ENCODE measurements at regions of chrX and their contacts with region 1.

Region 1: GRCh38 chrX:64205735-64206491 is 405 bp upstream of the AMER1 start:
- DNase-seq: peak; percentile 85 to 91 (median 87)
- H3K4me3 ChIP-seq: peak overlapping the region; percentile 42 to 83
- H3K4me3 Mint-ChIP-seq: peak overlapping the region; percentile 91 to 97 (median 93)
- H3K27ac ChIP-seq: peak overlapping the region; percentile 79
- H3K27ac Mint-ChIP-seq: peak overlapping the region; percentile 90 to 96 (median 93)
- H3K4me1 ChIP-seq: peaks cover 15% of the 10 kb centered on the region
- H3K4me1 Mint-ChIP-seq: peaks cover 6 to 25% (median 16%) of the 10 kb centered on the region in 4 donors
- H3K27me3 ChIP-seq: no peaks in the 10 kb centered on the region
- H3K27me3 Mint-ChIP-seq: no peaks in the 10 kb centered on the region

Region 2: DNA sequence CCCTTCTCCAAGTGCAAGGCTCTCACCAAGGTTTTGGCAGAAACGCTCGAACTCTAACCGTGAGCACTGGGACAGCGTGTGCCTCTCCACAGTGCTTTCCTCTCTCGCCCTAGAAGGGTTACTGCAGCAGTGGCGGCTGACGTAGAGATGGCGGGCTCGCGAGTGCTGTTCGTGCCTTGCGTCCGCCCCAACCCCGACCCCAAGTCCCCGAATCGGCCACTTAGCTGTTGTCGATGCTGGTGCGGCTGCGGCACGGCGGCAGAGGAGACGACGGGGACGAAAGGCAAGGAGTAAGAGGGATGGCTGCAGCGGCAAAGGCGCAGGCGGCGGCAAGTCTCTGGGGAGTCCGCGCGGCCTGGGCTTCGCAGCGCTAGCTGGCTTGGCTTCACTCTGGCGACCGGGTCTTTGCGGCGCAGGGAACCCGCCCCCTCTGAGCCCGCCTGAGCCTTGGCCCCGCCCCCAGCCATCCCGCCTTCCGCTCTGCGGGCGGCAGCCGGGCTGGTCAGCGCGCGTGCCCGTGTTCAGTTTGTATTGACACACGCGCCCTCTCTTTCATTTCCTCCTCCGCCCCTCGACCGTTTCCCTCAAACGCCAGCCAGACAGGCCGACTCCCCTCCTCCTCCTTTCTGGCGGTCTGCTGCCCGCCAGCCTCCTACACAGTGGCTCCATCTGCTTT is 854.8 kb before region 1 on chrX and contains the start of gene SPIN4:
- CTCF ChIA-PET with region 1: no interaction called
- POLR2A ChIA-PET with region 1: no interaction called
- intact Hi-C with region 1: loop called (anchors 2 kb)
- DNase-seq: peak; percentile 40 to 47 (median 43)
- H3K4me3 ChIP-seq: peak within 1 kb of the TSS; percentile 40 to 63
- H3K4me3 Mint-ChIP-seq: peak within 1 kb of the TSS; percentile 83 to 95 (median 92)
- H3K27ac ChIP-seq: peak within 1 kb of the TSS; percentile 37
- H3K27ac Mint-ChIP-seq: peak within 1 kb of the TSS; percentile 74 to 89 (median 86)
- H3K4me1 ChIP-seq: peaks cover 15% of the 10 kb centered on the region
- H3K4me1 Mint-ChIP-seq: peaks cover 8 to 29% (median 16%) of the 10 kb centered on the region in 4 donors
- H3K27me3 ChIP-seq: no peaks in the 10 kb centered on the region
- H3K27me3 Mint-ChIP-seq: no peaks in the 10 kb centered on the region
- total RNA-seq, gene SPIN4: 3.8 to 4.2 TPM

Region 3: GRCh38 chrX:64394874-64395567 is 189.1 kb after region 1 on chrX and contains the start of gene MTMR8:
- CTCF ChIA-PET with region 1: no interaction called
- POLR2A ChIA-PET with region 1: interaction called, 15 read pairs
- intact Hi-C with region 1: no loop called
- DNase-seq: peak; percentile 77 to 83 (median 80)
- H3K4me3 ChIP-seq: peak within 1 kb of the TSS; percentile 52 to 79
- H3K4me3 Mint-ChIP-seq: peak within 1 kb of the TSS; percentile 90 to 97 (median 94)
- H3K27ac ChIP-seq: peak within 1 kb of the TSS; percentile 54
- H3K27ac Mint-ChIP-seq: peak within 1 kb of the TSS; percentile 86 to 93 (median 91)
- H3K4me1 ChIP-seq: peaks cover 15% of the 10 kb centered on the region
- H3K4me1 Mint-ChIP-seq: peaks cover 12 to 56% (median 32%) of the 10 kb centered on the region in 4 donors
- H3K27me3 ChIP-seq: no peaks in the 10 kb centered on the region
- H3K27me3 Mint-ChIP-seq: no peaks in the 10 kb centered on the region
- total RNA-seq, gene MTMR8: 7.6 to 8.3 TPM

Region 4: GRCh38 chrX:64975989-64976672 is 770.2 kb after region 1 on chrX and contains the start of gene ZC4H2:
- CTCF ChIA-PET with region 1: no interaction called
- POLR2A ChIA-PET with region 1: interaction called, 5 read pairs
- intact Hi-C with region 1: loop called (anchors 10 kb)
- DNase-seq: peak; percentile 65 to 77 (median 68)
- H3K4me3 ChIP-seq: peak within 1 kb of the TSS; percentile 61 to 73
- H3K4me3 Mint-ChIP-seq: peak within 1 kb of the TSS; percentile 89 to 98 (median 96)
- H3K27ac ChIP-seq: peak within 1 kb of the TSS; percentile 24
- H3K27ac Mint-ChIP-seq: peak within 1 kb of the TSS; percentile 65 to 91 (median 87)
- H3K4me1 ChIP-seq: peaks cover 15% of the 10 kb centered on the region
- H3K4me1 Mint-ChIP-seq: peaks cover 4 to 33% (median 16%) of the 10 kb centered on the region in 4 donors
- H3K27me3 ChIP-seq: no peaks in the 10 kb centered on the region
- H3K27me3 Mint-ChIP-seq: no peaks in the 10 kb centered on the region
- total RNA-seq, gene ZC4H2: 8.2 to 11.8 TPM

Region 5: GRCh38 chrX:65034668-65035445 is 828.9 kb after region 1 on chrX:
- CTCF ChIA-PET with region 1: no interaction called
- POLR2A ChIA-PET with region 1: interaction called, 10 read pairs
- intact Hi-C with region 1: no loop called
- DNase-seq: peak; percentile 76 to 79 (median 79)
- H3K4me3 ChIP-seq: peak within 1 kb of the TSS; percentile 42 to 54
- H3K4me3 Mint-ChIP-seq: peak within 1 kb of the TSS; percentile 91 to 97 (median 93)
- H3K27ac ChIP-seq: peak within 1 kb of the TSS; percentile 58
- H3K27ac Mint-ChIP-seq: peak within 1 kb of the TSS; percentile 93 to 98 (median 95)
- H3K4me1 ChIP-seq: peaks cover 15% of the 10 kb centered on the region
- H3K4me1 Mint-ChIP-seq: peaks cover 10 to 26% (median 11%) of the 10 kb centered on the region in 4 donors
- H3K27me3 ChIP-seq: no peaks in the 10 kb centered on the region
- H3K27me3 Mint-ChIP-seq: no peaks in the 10 kb centered on the region

Region 6: DNA sequence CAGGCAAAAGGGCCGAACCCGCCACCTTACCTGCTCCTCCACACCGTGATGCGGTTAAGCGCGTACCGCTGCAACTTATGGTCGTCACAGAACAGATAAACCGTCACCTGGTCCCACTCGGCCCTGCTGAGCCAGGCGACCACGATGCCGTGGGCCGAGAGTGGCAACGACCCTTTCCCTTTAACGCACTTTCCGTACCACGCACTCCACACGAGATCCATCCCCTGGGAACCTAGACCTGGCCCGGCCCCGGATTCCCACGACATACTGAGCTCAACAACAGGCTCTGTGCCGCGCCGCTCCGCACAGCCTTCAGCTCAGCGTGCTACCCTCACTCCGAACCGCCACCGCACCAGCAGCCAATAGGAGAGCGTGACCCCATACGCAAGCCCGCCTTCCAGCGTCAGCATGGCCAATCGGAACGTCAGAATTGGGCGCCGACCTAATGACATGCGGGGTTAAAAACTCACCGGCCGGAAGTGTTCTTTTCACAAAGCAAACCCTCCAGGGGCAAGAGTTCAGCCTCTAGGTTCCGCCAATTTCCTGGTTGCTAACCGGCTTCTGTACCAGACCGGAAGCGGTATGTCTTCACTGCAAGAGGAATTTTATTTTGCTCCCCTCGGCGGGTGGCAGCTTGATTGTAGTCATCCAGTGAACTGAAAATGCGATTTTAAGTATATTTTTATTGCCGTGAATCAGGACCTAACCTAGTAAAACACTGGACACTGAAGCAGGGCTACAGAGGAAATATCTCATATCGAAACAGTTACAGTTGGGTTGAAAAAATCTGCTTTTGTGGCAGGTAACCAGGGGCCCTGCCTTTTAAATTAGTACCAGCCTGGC is 1328.8 kb after region 1 on chrX and contains the start of gene LAS1L:
- CTCF ChIA-PET with region 1: no interaction called
- POLR2A ChIA-PET with region 1: no interaction called
- intact Hi-C with region 1: loop called (anchors 2 kb)
- DNase-seq: peak; percentile 90 to 94 (median 91)
- H3K4me3 ChIP-seq: peak within 1 kb of the TSS; percentile 66 to 75
- H3K4me3 Mint-ChIP-seq: peak within 1 kb of the TSS; percentile 97 to 100 (median 100)
- H3K27ac ChIP-seq: peak within 1 kb of the TSS; percentile 73
- H3K27ac Mint-ChIP-seq: peak within 1 kb of the TSS; percentile 97 to 100 (median 99)
- H3K4me1 ChIP-seq: peaks cover 18% of the 10 kb centered on the region
- H3K4me1 Mint-ChIP-seq: peaks cover 7 to 24% (median 16%) of the 10 kb centered on the region in 4 donors
- H3K27me3 ChIP-seq: no peaks in the 10 kb centered on the region
- H3K27me3 Mint-ChIP-seq: no peaks in the 10 kb centered on the region
- total RNA-seq, gene LAS1L: 38.5 to 41.6 TPM